ENCODE measurements at regions of chr18 and their contacts with region 1.

Region 1: DNA sequence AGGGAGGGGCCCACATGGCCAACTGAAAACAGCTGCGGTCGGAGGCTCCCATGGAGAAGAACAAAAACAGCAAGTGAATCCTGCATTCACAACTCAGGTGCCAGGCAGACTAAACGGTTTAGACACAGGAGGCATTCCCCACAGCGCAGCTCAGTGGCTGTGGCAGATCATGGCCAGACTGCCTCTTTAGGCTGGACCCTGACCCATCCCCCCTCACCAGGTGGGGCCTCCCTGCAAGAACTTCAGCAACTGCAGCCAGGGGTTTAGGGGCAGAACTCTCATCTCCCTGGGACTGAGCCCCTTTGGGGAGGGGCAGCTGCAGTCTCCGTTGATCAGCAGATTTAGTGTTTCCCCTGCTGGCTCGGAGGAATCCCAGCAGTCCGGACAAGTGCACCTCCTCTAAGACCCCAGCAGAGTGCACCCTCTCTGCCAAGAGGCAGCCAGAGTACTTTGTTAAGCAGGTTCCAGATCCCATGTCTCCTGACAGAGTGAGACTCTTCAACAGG is 346.7 kb downstream of the SS18 start:
- DNase-seq: no peak

Region 2: GRCh38 chr18:24530630-24531111 is 1213.0 kb before region 1 on chr18:
- intact Hi-C with region 1: loop called in 1 of 2 experiments (anchors 5 kb)
- DNase-seq: no peak

Region 3: DNA sequence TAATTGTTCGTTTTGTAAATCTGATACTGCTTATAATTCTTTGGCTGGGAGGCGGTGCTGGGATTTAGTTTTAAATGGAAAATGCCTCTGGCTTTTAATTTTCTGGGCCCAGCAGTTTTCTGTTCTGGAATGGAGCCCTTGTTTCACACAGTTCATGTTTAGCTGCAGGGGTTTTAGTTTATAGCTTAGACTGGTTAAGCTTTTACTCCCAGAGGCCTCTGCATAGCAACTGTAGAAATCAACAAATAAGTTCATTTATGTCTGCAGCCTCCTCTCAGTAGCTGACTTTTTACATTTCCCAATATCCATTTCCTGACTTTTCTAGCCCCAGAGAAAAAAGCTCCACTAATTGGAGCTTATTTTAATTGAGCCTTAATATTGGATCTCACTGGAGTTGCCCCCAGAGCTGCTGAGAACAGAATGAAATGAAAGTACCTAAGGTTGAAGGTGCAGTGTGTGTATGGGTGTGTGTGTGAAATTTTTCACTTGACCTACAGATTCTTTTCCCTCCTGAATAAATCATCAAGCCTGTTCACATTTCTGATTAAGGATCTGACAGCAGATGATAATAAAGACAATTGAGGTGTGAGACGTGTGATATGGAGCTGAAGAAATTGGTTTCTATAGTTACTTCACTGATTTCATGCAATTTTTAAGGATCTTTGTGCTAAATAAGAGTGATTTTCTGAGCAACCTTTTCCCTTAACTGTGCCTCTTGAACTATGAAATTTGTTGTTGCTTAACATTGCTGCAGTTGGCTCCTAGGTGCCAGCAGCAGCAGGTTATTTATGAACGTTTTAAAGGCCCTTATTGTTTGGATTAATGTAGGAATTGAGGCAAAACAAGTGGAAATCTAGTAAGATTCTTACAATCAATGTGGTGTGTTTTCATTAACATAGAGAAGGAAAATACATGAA is 592.1 kb after region 1 on chr18:
- intact Hi-C with region 1: no loop called
- DNase-seq: no peak